Activated B cell treated with CpG ODN at 0.5 μM for 24 hours (primary cell): ENCODE measurements at regions of chr11 and their contacts with region 1.

Region 1: GRCh38 chr11:128624269-128625175 is 37.2 kb upstream of the ETS1 start:
- DNase-seq: peak; percentile 64
- ATAC-seq: peak; percentile 82
- H3K4me3 Mint-ChIP-seq: peak overlapping the region; percentile 74
- H3K27ac Mint-ChIP-seq: peak overlapping the region; percentile 99
- H3K4me1 Mint-ChIP-seq: peaks cover 99% of the 10 kb centered on the region
- H3K27me3 Mint-ChIP-seq: no peaks in the 10 kb centered on the region
- CTCF ChIP-seq: no peak

Region 2: GRCh38 chr11:128497061-128497775 is 127.3 kb before region 1 on chr11:
- CTCF ChIA-PET with region 1: interaction called, 10 read pairs
- POLR2A ChIA-PET with region 1: interaction called, 15 read pairs
- intact Hi-C with region 1: loop called (anchors 1 kb)
- DNase-seq: peak; percentile 43
- ATAC-seq: peak; percentile 92
- H3K4me3 Mint-ChIP-seq: peak overlapping the region; percentile 78
- H3K27ac Mint-ChIP-seq: peak overlapping the region; percentile 93
- H3K4me1 Mint-ChIP-seq: peaks cover 98% of the 10 kb centered on the region
- H3K27me3 Mint-ChIP-seq: no peaks in the 10 kb centered on the region
- CTCF ChIP-seq: no peak

Region 3: GRCh38 chr11:128544471-128545051 is 80.0 kb before region 1 on chr11:
- CTCF ChIA-PET with region 1: interaction called, 7 read pairs
- POLR2A ChIA-PET with region 1: interaction called, 10 read pairs
- intact Hi-C with region 1: no loop called
- DNase-seq: no peak
- ATAC-seq: no peak
- H3K4me3 Mint-ChIP-seq: peak overlapping the region; percentile 9
- H3K27ac Mint-ChIP-seq: no peak overlapping the region
- H3K4me1 Mint-ChIP-seq: peaks cover 41% of the 10 kb centered on the region
- H3K27me3 Mint-ChIP-seq: no peaks in the 10 kb centered on the region
- CTCF ChIP-seq: no peak

Region 4: GRCh38 chr11:128565881-128566280 is 58.6 kb before region 1 on chr11:
- CTCF ChIA-PET with region 1: interaction called, 5 read pairs
- POLR2A ChIA-PET with region 1: interaction called, 48 read pairs
- intact Hi-C with region 1: loop called (anchors 1 kb)
- DNase-seq: no peak
- ATAC-seq: no peak
- H3K4me3 Mint-ChIP-seq: no peak overlapping the region
- H3K27ac Mint-ChIP-seq: peak overlapping the region; percentile 68
- H3K4me1 Mint-ChIP-seq: peaks cover 76% of the 10 kb centered on the region
- H3K27me3 Mint-ChIP-seq: no peaks in the 10 kb centered on the region
- CTCF ChIP-seq: no peak

Region 5: GRCh38 chr11:128784059-128784804 is 159.7 kb after region 1 on chr11:
- CTCF ChIA-PET with region 1: no interaction called
- POLR2A ChIA-PET with region 1: no interaction called
- intact Hi-C with region 1: no loop called
- DNase-seq: no peak
- ATAC-seq: no peak
- H3K4me3 Mint-ChIP-seq: no peak overlapping the region
- H3K27ac Mint-ChIP-seq: peak overlapping the region; percentile 15
- H3K4me1 Mint-ChIP-seq: no peaks in the 10 kb centered on the region
- H3K27me3 Mint-ChIP-seq: no peaks in the 10 kb centered on the region
- CTCF ChIP-seq: no peak